Panc1 (cell line): ENCODE measurements at regions of chr1 and their contacts with region 1.

Region 1: GRCh38 chr1:19651141-19651737 is 7.1 kb downstream of the NBL1 start:
- DNase-seq: no peak
- ATAC-seq: peak; percentile 85
- H3K4me3 ChIP-seq: no peak overlapping the region
- H3K27ac ChIP-seq: no peak overlapping the region
- H3K4me1 ChIP-seq: peaks cover 47% of the 10 kb centered on the region
- H3K27me3 ChIP-seq: no peaks in the 10 kb centered on the region
- CTCF ChIP-seq: peak; percentile 91

Region 2: DNA sequence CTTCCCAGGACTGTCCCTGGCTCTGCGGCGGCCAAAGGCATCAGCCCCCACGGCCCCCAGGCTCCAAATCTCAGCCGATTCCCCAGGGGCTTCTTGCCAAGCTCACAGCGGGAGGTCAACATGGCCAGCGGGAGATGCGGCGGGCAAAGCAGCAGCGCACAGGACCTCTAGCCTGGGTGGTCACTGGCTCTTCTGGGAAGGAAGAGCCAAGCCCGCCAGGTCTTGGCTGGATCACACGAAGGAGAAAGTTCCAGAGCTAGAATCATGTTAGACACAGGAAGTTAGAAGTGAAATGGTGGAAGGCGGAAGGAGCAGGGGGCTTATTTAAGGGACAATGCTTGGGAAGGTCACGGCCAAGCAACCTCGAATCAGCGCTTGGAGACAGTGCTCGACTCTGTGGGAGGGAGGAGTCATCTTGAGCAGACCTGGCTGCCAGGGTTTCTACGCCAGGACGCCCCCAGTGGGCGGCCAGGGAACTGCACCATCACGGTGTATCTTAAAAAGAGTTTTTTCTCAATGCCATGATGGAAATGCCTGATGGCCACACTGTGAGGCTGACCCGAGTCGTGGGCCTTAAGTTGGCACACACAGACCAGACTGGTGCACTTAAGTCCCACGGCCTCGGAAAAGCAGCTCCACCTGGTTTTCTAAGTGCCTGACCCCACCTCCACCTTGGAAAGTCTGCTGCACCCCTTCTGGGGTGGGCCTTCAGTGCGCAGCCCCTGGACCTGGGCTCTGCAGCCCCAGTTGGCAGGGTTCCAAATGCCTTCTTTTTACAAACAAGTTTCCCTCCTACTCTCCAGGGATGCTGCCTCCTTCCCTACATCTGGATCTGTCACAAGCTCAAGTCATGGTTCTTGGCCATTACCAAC is 309.8 kb before region 1 on chr1:
- CTCF ChIA-PET with region 1: interaction called, 4 read pairs
- POLR2A ChIA-PET with region 1: no interaction called
- in situ Hi-C with region 1: no loop called
- intact Hi-C with region 1: loop called (anchors 5 kb)
- DNase-seq: peak; percentile 45
- ATAC-seq: peak; percentile 62
- H3K4me3 ChIP-seq: no peak overlapping the region
- H3K27ac ChIP-seq: no peak overlapping the region; the same call in 1 of the 2 replicates
- H3K4me1 ChIP-seq: 0 out of 2 replicates have a peak, but pooled peaks cover 3% of the 10 kb centered on the region
- H3K27me3 ChIP-seq: no peaks in the 10 kb centered on the region
- CTCF ChIP-seq: peak; percentile 97

Region 3: DNA sequence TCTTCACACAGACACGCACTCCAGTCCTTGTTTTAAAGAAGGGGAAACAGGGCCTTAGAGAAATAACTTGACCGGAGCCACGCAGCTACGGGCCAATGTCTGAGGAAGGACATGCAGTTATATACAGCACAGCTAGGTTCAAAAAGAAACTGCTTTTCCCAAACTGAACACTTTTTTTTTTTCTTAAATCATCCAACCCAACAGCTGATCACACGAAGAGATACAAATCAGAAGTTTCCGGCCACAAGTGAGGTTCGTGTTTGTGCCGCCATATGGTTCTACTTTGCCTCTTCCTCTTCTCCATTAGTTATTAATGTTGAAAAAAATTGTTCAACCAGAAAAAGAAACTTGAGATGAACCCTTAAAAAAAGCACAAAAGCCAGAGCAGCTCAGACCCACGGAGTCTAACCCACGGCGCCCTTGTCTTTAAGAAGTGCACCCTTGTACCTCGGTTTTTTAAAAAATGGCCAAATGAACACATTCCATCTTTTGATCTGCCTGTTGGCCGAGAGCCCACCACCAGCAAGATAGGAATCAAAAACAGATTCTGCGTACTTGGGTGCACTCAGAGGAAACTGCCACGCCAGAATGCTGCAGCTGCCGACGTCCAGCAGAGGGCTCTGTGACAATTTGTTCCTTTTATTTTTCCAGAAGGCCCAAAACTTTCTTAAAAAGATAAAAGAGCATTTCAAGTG is 260.2 kb before region 1 on chr1:
- CTCF ChIA-PET with region 1: interaction called, 3 read pairs
- POLR2A ChIA-PET with region 1: no interaction called
- in situ Hi-C with region 1: no loop called
- intact Hi-C with region 1: loop called (anchors 5 kb)
- DNase-seq: peak; percentile 22
- ATAC-seq: no peak
- H3K4me3 ChIP-seq: no peak overlapping the region
- H3K27ac ChIP-seq: 0 out of 2 replicates have a peak overlapping the region, but pooled peaks have one; percentile 9
- H3K4me1 ChIP-seq: peaks cover 21% of the 10 kb centered on the region
- H3K27me3 ChIP-seq: no peaks in the 10 kb centered on the region
- CTCF ChIP-seq: peak; percentile 91

Region 4: GRCh38 chr1:19485362-19486187 is 165.7 kb before region 1 on chr1 and contains the start of gene CAPZB:
- CTCF ChIA-PET with region 1: interaction called, 3 read pairs
- POLR2A ChIA-PET with region 1: no interaction called
- in situ Hi-C with region 1: no loop called
- intact Hi-C with region 1: loop called (anchors 5 kb)
- DNase-seq: no peak
- ATAC-seq: peak; percentile 92
- H3K4me3 ChIP-seq: peak within 1 kb of the TSS; percentile 88 to 95
- H3K27ac ChIP-seq: peak within 1 kb of the TSS; percentile 96
- H3K4me1 ChIP-seq: peaks cover 48% of the 10 kb centered on the region
- H3K27me3 ChIP-seq: no peaks in the 10 kb centered on the region
- CTCF ChIP-seq: no peak
- total RNA-seq, gene CAPZB: 491 TPM

Region 5: DNA sequence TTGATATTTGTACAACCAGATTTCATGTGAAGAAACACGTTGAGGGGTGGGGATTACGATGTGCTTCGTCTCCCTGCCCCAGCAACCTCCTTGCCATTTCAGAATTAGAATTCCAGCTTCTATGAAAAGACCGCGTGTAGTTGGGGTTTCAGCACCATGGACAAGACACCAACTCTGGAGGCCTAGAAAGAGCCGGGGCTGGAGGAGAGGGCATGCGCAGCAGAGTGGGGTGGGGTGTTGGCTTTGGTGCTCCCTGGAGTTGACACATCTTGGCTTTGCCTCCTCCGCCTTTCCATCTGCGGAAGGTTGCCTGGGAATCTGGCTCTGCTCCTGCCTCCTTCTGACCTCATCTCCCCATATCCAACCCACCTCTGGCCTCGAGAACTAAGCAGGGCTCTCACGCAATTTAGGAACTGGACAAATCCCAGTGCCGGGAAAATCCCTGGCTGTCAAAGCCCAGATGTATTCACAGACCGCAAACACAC is 25.2 kb after region 1 on chr1:
- CTCF ChIA-PET with region 1: interaction called, 10 read pairs
- POLR2A ChIA-PET with region 1: no interaction called
- in situ Hi-C with region 1: no loop called
- intact Hi-C with region 1: no loop called
- DNase-seq: no peak
- ATAC-seq: no peak; the same call in 1 of the 2 replicates
- H3K4me3 ChIP-seq: no peak overlapping the region
- H3K27ac ChIP-seq: no peak overlapping the region
- H3K4me1 ChIP-seq: no peaks in the 10 kb centered on the region
- H3K27me3 ChIP-seq: peaks cover 2% of the 10 kb centered on the region; the same call in 1 of the 2 replicates
- CTCF ChIP-seq: no peak

Region 6: DNA sequence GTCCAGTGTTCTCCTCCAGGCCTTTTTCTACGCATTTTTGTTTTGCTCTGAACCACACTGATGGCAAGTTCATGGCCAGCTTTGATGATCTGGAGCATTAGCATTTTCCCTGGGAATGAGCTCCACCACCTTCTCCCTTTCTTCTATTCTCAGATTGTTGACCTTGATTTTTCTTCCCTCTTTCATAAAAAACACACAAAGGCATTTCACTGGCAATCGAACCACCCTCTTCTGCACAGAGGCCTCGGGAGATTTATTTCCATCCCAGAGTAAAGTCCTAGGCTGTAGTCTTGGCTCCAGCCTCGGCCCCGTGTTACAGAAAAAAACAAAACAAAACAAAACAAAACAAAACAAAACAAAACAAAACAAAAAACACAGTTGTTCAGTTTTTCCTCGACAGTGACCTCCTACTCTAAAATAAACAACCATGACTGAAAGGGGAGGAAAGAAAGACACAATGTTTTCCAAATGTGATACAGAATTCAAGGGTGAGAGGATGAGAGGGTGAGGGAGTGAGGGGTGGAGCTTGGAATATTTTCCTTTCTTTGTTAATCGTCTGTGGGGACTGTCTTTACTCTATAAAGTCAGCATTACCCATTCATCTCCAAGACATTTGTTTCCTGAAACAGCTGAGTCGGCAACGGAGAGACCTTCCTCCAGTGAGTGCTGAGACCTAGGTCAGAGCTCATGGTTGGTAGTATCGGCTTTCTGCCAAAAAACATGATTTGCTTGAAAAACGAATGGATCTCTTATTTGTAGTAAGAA is 193.7 kb after region 1 on chr1:
- CTCF ChIA-PET with region 1: no interaction called
- POLR2A ChIA-PET with region 1: no interaction called
- in situ Hi-C with region 1: no loop called
- intact Hi-C with region 1: no loop called
- DNase-seq: no peak
- ATAC-seq: no peak
- H3K4me3 ChIP-seq: no peak overlapping the region
- H3K27ac ChIP-seq: no peak overlapping the region
- H3K4me1 ChIP-seq: no peaks in the 10 kb centered on the region; the same call in 1 of the 2 replicates
- H3K27me3 ChIP-seq: no peaks in the 10 kb centered on the region
- CTCF ChIP-seq: no peak